MCF 10A (cell line): ENCODE measurements at regions of chr2 and their contacts with region 1.

Region 1: GRCh38 chr2:11829947-11830707 is 83.7 kb downstream of the LPIN1 start:
- DNase-seq: peak; percentile 98
- H3K4me3 Mint-ChIP-seq: peak overlapping the region; percentile 62
- H3K27ac Mint-ChIP-seq: peak overlapping the region; percentile 46
- H3K4me1 Mint-ChIP-seq: peaks cover 11% of the 10 kb centered on the region
- H3K27me3 Mint-ChIP-seq: no peaks in the 10 kb centered on the region
- CTCF ChIP-seq: peak; percentile 58

Region 2: DNA sequence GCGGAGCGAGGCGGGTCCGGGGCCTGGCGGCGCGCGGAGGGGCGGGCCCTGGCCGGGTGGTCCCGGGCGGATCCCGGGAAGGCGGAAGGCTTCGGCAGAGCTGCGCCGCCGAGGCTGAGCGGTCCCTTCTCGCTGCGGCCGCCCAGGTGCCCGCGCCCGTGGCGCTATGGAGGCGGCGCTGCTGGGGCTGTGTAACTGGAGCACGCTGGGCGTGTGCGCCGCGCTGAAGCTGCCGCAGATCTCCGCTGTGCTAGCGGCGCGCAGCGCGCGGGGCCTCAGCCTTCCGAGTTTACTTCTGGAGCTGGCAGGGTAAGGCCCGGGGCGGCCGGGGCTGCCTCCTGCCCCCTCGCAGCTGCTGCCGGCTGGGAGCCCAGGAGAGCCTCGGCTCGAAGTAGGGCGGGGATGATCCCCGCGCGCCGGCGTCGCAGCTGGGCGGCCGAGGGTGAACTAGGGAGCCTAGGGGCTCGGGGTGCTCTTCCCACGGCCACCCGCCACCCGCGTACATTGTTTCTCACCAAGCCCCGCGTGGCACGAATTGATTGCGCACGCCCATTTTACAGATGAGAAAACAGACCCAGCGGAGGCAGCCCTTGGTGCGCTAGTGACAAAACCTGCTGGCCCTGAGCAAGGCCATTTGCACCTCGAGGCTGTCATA is 674.6 kb before region 1 on chr2 and contains the start of gene SLC66A3:
- CTCF ChIA-PET with region 1: no interaction called
- POLR2A ChIA-PET with region 1: no interaction called
- intact Hi-C with region 1: no loop called
- DNase-seq: peak; percentile 84
- H3K4me3 Mint-ChIP-seq: peak within 1 kb of the TSS; percentile 67
- H3K27ac Mint-ChIP-seq: no peak within 1 kb of the TSS
- H3K4me1 Mint-ChIP-seq: no peaks in the 10 kb centered on the region
- H3K27me3 Mint-ChIP-seq: no peaks in the 10 kb centered on the region
- CTCF ChIP-seq: no peak
- total RNA-seq, gene SLC66A3: 3.7 and 5.0 TPM in 2 replicates

Region 3: GRCh38 chr2:11701751-11702301 is 128.3 kb before region 1 on chr2:
- CTCF ChIA-PET with region 1: no interaction called
- POLR2A ChIA-PET with region 1: no interaction called
- intact Hi-C with region 1: no loop called
- DNase-seq: no peak
- H3K4me3 Mint-ChIP-seq: no peak overlapping the region
- H3K27ac Mint-ChIP-seq: no peak overlapping the region
- H3K4me1 Mint-ChIP-seq: peaks cover 11% of the 10 kb centered on the region
- H3K27me3 Mint-ChIP-seq: no peaks in the 10 kb centered on the region
- CTCF ChIP-seq: no peak

Region 4: GRCh38 chr2:11811036-11811654 is 19.0 kb before region 1 on chr2:
- CTCF ChIA-PET with region 1: no interaction called
- POLR2A ChIA-PET with region 1: no interaction called
- intact Hi-C with region 1: no loop called
- DNase-seq: no peak
- H3K4me3 Mint-ChIP-seq: no peak overlapping the region
- H3K27ac Mint-ChIP-seq: no peak overlapping the region
- H3K4me1 Mint-ChIP-seq: no peaks in the 10 kb centered on the region
- H3K27me3 Mint-ChIP-seq: no peaks in the 10 kb centered on the region
- CTCF ChIP-seq: no peak

Region 5: GRCh38 chr2:11955314-11955713 is 125.2 kb after region 1 on chr2:
- CTCF ChIA-PET with region 1: interaction called, 4 read pairs
- POLR2A ChIA-PET with region 1: interaction called, 3 read pairs
- intact Hi-C with region 1: loop called (anchors 1 kb)
- DNase-seq: peak; percentile 86
- H3K4me3 Mint-ChIP-seq: no peak overlapping the region
- H3K27ac Mint-ChIP-seq: peak overlapping the region; percentile 47
- H3K4me1 Mint-ChIP-seq: peaks cover 28% of the 10 kb centered on the region
- H3K27me3 Mint-ChIP-seq: no peaks in the 10 kb centered on the region
- CTCF ChIP-seq: no peak

Region 6: GRCh38 chr2:12169721-12170120 is 339.6 kb after region 1 on chr2:
- CTCF ChIA-PET with region 1: interaction called, 4 read pairs
- POLR2A ChIA-PET with region 1: no interaction called
- intact Hi-C with region 1: loop called (anchors 1 kb)
- DNase-seq: no peak
- H3K4me3 Mint-ChIP-seq: no peak overlapping the region
- H3K27ac Mint-ChIP-seq: no peak overlapping the region
- H3K4me1 Mint-ChIP-seq: no peaks in the 10 kb centered on the region
- H3K27me3 Mint-ChIP-seq: no peaks in the 10 kb centered on the region
- CTCF ChIP-seq: no peak

Region 7: DNA sequence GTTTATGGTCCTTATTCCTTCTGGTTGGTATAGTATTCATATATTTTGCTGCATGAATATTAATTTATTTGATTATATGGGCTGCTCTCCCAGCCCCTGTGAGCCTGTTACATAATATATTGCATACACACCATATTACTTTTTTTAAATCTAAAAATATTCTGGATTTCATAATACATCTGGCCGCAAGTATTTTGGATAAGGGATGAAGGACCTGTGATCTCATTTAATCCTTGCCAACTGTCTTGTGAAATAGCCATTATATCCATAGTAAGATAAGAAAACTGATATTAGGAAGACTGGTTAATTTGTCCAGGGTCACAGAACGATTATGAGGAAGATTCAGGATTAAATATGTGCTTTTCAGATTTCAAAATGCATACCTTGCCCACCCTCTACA is 349.9 kb after region 1 on chr2:
- CTCF ChIA-PET with region 1: no interaction called
- POLR2A ChIA-PET with region 1: no interaction called
- intact Hi-C with region 1: no loop called
- DNase-seq: peak; percentile 30
- H3K4me3 Mint-ChIP-seq: no peak overlapping the region
- H3K27ac Mint-ChIP-seq: no peak overlapping the region
- H3K4me1 Mint-ChIP-seq: peaks cover 13% of the 10 kb centered on the region
- H3K27me3 Mint-ChIP-seq: no peaks in the 10 kb centered on the region
- CTCF ChIP-seq: no peak

Region 8: GRCh38 chr2:12619975-12620374 is 789.8 kb after region 1 on chr2:
- CTCF ChIA-PET with region 1: no interaction called
- POLR2A ChIA-PET with region 1: no interaction called
- intact Hi-C with region 1: loop called (anchors 1 kb)
- DNase-seq: peak; percentile 95
- H3K4me3 Mint-ChIP-seq: no peak overlapping the region
- H3K27ac Mint-ChIP-seq: no peak overlapping the region
- H3K4me1 Mint-ChIP-seq: peaks cover 15% of the 10 kb centered on the region
- H3K27me3 Mint-ChIP-seq: no peaks in the 10 kb centered on the region
- CTCF ChIP-seq: no peak